CD4-positive, alpha-beta memory T cell (primary cell): ENCODE measurements at regions of chr17 and their contacts with region 1.

Region 1: DNA sequence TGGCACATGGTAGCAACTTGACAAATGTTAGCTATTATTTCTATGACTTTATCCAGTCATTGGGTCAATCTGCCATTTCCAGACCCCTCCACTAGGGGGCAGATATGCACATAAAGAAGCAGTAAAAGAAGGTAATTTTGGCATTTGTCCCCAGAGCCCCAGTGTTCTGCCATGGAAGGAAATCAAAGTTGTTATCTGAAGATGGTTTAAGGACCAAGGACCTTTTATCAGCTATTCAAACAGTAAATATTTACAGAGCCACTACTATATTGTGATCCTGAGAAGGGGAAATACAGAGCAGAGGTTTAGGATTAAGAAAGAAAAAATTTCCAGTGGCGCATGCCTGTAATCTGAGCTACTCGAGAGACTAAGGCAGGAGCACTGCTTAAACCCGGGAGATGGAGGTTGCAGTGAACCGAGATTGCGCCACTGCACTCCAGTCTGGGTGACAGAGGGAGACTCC is 20.0 kb downstream of the TRAF4 start:
- DNase-seq: peak; percentile 71 to 82 (median 77)
- H3K4me3 ChIP-seq: no peak overlapping the region
- H3K4me3 Mint-ChIP-seq: no peak overlapping the region
- H3K27ac ChIP-seq: no peak overlapping the region
- H3K27ac Mint-ChIP-seq: peak overlapping the region in 5 of 7 donors; percentile 77 to 84 (median 82)
- H3K4me1 ChIP-seq: no peaks in the 10 kb centered on the region
- H3K4me1 Mint-ChIP-seq: peaks cover 3 to 8% (median 4%) of the 10 kb centered on the region in 4 donors
- H3K27me3 ChIP-seq: no peaks in the 10 kb centered on the region
- H3K27me3 Mint-ChIP-seq: no peaks in the 10 kb centered on the region

Region 2: DNA sequence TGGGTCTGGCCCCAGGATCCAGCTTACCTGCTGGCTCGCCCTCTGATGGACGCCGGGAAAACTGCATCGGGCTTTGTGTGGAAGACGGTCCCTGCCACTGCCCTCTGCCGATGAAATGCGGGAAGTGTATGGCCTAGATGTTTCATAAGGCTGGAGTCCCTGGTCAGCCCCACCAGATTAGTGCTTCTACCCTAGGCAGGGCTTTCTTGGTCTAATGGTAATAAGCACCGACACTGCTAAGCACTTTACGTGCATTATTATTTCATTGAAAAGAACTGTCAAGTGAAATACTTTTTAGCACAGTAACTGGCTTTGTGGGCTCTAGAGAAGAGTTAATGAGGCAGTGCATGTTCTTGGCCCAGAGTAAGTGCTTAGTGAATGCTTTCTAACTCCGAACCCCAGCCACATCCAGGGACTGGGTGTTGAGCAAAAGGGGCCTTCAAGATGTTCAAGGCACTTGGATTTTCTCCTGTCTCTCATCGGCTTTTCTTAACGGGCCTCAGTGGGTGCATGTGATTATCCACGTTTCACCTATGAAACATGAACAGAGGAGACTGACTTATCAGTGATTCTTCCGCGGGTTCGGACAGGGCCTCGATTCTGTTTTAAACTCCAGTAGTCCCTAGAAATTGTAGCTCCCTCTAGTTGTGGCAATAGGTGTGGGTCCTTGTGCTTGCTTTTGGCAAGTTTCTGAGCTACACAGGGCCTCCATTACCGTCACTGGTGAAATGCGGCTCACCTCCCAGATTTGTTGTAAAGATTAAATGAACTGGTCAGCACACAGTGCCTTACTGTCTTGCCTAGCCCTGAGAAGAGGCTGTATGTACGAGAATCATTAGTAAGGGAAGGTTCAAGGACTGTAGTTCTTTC is 13.4 kb before region 1 on chr17:
- CTCF ChIA-PET with region 1: interaction called, 88 read pairs
- POLR2A ChIA-PET with region 1: interaction called, 3 read pairs
- intact Hi-C with region 1: no loop called
- DNase-seq: peak; percentile 82 to 89 (median 85)
- H3K4me3 ChIP-seq: no peak overlapping the region
- H3K4me3 Mint-ChIP-seq: peak overlapping the region in 1 of 8 donors; percentile 49
- H3K27ac ChIP-seq: peak overlapping the region; percentile 10
- H3K27ac Mint-ChIP-seq: peak overlapping the region in 6 of 7 donors; percentile 17 to 85 (median 70)
- H3K4me1 ChIP-seq: peaks cover 13% of the 10 kb centered on the region
- H3K4me1 Mint-ChIP-seq: peaks cover 7 to 18% (median 11%) of the 10 kb centered on the region in 4 donors
- H3K27me3 ChIP-seq: no peaks in the 10 kb centered on the region
- H3K27me3 Mint-ChIP-seq: no peaks in the 10 kb centered on the region

Region 3: GRCh38 chr17:28812091-28812747 is 48.4 kb after region 1 on chr17:
- CTCF ChIA-PET with region 1: interaction called, 30 read pairs
- POLR2A ChIA-PET with region 1: interaction called, 6 read pairs
- intact Hi-C with region 1: loop called (anchors 1 kb)
- DNase-seq: peak; percentile 94 to 97 (median 95)
- H3K4me3 ChIP-seq: peak overlapping the region; percentile 75 to 84
- H3K4me3 Mint-ChIP-seq: peak overlapping the region; percentile 90 to 98 (median 93)
- H3K27ac ChIP-seq: peak overlapping the region; percentile 90
- H3K27ac Mint-ChIP-seq: peak overlapping the region; percentile 94 to 100 (median 98)
- H3K4me1 ChIP-seq: peaks cover 44% of the 10 kb centered on the region
- H3K4me1 Mint-ChIP-seq: peaks cover 19 to 47% (median 37%) of the 10 kb centered on the region in 4 donors
- H3K27me3 ChIP-seq: no peaks in the 10 kb centered on the region
- H3K27me3 Mint-ChIP-seq: no peaks in the 10 kb centered on the region

Region 4: GRCh38 chr17:28842282-28843012 is 78.6 kb after region 1 on chr17 and contains the start of gene FAM222B:
- CTCF ChIA-PET with region 1: interaction called, 23 read pairs
- POLR2A ChIA-PET with region 1: interaction called, 3 read pairs
- intact Hi-C with region 1: loop called (anchors 1 kb)
- DNase-seq: peak; percentile 85 to 87 (median 87)
- H3K4me3 ChIP-seq: peak within 1 kb of the TSS; percentile 55 to 87
- H3K4me3 Mint-ChIP-seq: peak within 1 kb of the TSS; percentile 93 to 100 (median 98)
- H3K27ac ChIP-seq: peak within 1 kb of the TSS; percentile 84
- H3K27ac Mint-ChIP-seq: peak within 1 kb of the TSS; percentile 93 to 99 (median 98)
- H3K4me1 ChIP-seq: peaks cover 25% of the 10 kb centered on the region
- H3K4me1 Mint-ChIP-seq: peaks cover 15 to 26% (median 21%) of the 10 kb centered on the region in 4 donors
- H3K27me3 ChIP-seq: no peaks in the 10 kb centered on the region
- H3K27me3 Mint-ChIP-seq: no peaks in the 10 kb centered on the region
- total RNA-seq, gene FAM222B: 19.0 to 23.0 TPM

Region 5: DNA sequence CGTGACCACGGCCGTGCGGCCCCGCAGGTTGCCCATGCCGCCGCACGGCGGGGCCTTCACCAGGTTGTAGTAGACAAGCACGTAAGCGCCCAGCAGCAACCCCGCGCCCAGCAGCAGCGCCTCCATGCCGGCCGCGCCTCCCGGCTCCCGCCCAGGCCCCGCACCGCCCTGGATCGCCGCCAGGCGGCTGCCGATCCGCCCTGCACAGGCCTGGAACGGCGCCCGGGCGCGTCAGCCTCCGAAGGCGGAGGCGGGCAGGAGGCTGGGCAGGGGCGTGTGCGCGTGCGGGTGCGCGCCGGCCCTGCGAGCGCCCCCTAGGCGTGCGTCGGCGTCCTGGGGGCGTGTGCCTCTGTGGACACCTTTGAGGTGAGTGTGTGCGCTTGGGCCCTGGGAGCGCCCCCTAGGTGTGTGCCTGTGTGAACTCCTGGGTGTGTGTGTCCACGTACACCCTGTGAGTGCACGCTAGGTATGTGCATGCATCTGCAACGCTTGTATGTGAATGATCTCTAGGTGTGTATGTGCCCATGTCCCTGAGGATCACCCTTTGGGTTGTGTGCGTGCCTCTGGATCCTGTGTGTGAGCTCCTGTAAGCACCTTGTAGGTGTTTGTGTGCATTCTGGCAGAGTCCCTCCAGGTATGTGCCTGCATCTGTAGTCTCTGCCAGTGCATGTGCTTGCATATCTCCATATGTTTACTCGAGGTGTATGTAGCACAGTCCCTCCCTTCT is 139.1 kb after region 1 on chr17 and contains the start of gene DHRS13:
- CTCF ChIA-PET with region 1: interaction called, 55 read pairs
- POLR2A ChIA-PET with region 1: interaction called, 16 read pairs
- intact Hi-C with region 1: loop called (anchors 1 kb)
- DNase-seq: peak; percentile 93 to 98 (median 96)
- H3K4me3 ChIP-seq: peak within 1 kb of the TSS; percentile 77 to 95
- H3K4me3 Mint-ChIP-seq: peak within 1 kb of the TSS; percentile 83 to 97 (median 90)
- H3K27ac ChIP-seq: peak within 1 kb of the TSS; percentile 76
- H3K27ac Mint-ChIP-seq: peak within 1 kb of the TSS; percentile 89 to 97 (median 93)
- H3K4me1 ChIP-seq: peaks cover 35% of the 10 kb centered on the region
- H3K4me1 Mint-ChIP-seq: peaks cover 31 to 50% (median 37%) of the 10 kb centered on the region in 4 donors
- H3K27me3 ChIP-seq: no peaks in the 10 kb centered on the region
- H3K27me3 Mint-ChIP-seq: no peaks in the 10 kb centered on the region
- total RNA-seq, gene DHRS13: 44.6 to 49.6 TPM

Region 6: GRCh38 chr17:28925912-28926365 is 162.1 kb after region 1 on chr17:
- CTCF ChIA-PET with region 1: interaction called, 36 read pairs
- POLR2A ChIA-PET with region 1: no interaction called
- intact Hi-C with region 1: no loop called
- DNase-seq: peak; percentile 87 to 92 (median 89)
- H3K4me3 ChIP-seq: peak overlapping the region in 1 of 2 donors; percentile 15
- H3K4me3 Mint-ChIP-seq: peak overlapping the region; percentile 49 to 80 (median 60)
- H3K27ac ChIP-seq: peak overlapping the region; percentile 77
- H3K27ac Mint-ChIP-seq: peak overlapping the region; percentile 90 to 98 (median 96)
- H3K4me1 ChIP-seq: peaks cover 56% of the 10 kb centered on the region
- H3K4me1 Mint-ChIP-seq: peaks cover 49 to 79% (median 59%) of the 10 kb centered on the region in 4 donors
- H3K27me3 ChIP-seq: no peaks in the 10 kb centered on the region
- H3K27me3 Mint-ChIP-seq: no peaks in the 10 kb centered on the region